ENCODE measurements at regions of chr1 and their contacts with region 1.

Region 1: DNA sequence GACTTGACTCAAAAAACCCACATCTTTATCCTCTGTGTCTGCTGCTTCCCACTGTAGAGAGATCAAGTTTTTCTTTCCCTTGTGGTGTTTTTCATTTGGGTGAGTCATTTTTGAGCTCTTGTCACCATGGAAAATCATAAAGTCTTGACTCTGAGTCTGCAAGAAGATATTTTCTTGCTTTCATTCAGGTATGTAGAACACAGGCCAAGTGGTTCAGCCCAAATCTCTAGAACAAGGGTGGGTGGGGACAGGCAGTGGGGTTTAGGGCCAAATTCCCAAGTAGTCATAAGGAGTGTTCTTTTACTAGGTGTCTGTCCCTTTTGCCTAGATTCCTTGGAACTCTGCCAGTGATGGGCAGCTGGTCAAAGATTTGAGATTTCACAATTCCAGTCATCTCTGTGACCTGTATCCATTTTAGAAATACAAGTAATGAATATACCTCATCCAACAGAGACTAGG is 21.5 kb upstream of the ARHGAP29 start:
- DNase-seq: peak; percentile 89
- H3K4me3 Mint-ChIP-seq: peak overlapping the region; percentile 50
- H3K27ac Mint-ChIP-seq: peak overlapping the region; percentile 99
- H3K4me1 Mint-ChIP-seq: peaks cover 46% of the 10 kb centered on the region
- H3K27me3 Mint-ChIP-seq: no peaks in the 10 kb centered on the region
- CTCF ChIP-seq: no peak

Region 2: GRCh38 chr1:94270801-94271203 is 11.9 kb after region 1 on chr1:
- CTCF ChIA-PET with region 1: interaction called, 10 read pairs
- POLR2A ChIA-PET with region 1: interaction called, 10 read pairs
- intact Hi-C with region 1: no loop called
- DNase-seq: peak; percentile 76
- H3K4me3 Mint-ChIP-seq: no peak overlapping the region
- H3K27ac Mint-ChIP-seq: peak overlapping the region; percentile 24
- H3K4me1 Mint-ChIP-seq: peaks cover 19% of the 10 kb centered on the region
- H3K27me3 Mint-ChIP-seq: no peaks in the 10 kb centered on the region
- CTCF ChIP-seq: no peak

Region 3: DNA sequence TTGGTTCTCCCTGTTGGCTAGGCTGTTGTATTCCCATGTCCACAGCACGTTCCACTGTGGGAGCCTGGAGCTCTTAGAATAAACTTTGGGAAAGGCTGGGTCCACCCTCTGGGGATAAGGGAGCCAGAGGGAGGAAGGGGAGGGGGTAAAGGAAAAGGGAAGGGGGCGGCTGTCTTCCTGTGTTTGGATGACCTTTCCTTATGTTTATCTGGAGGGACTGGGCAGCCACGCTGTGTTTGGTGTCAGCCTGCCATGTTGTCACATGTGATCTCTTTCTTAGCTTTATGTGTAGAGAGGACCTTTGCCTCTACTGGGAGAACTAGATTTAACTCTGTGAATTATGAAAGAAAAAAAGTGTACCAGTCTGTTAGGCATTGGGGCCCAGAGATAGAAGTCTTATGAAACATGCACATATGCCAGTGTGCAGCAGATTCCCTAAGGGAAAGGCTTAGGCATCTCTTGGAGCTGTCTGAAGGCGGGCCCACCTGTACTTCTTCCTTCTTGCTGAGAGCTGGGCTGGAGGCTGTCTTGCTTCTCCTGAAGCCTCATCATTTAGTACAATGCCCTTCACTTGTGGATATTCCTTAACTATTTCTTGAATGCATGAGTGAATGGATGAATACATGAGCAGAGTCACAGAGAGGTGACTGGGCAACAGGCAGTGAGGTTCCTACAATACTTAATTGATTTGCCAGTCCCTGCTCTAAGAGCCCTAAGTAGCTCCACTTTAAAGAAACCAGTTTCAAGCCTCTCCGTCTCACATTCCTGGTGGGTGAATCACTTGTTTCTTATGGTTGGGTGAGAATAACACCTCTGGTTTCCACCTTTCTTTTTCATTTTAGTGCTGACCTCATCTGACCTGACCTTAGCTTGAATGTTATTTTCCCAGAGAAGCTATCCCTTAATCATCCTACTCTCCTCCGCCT is 41.0 kb after region 1 on chr1:
- CTCF ChIA-PET with region 1: no interaction called
- POLR2A ChIA-PET with region 1: interaction called, 16 read pairs
- intact Hi-C with region 1: no loop called
- DNase-seq: peak; percentile 91
- H3K4me3 Mint-ChIP-seq: no peak overlapping the region
- H3K27ac Mint-ChIP-seq: peak overlapping the region; percentile 92
- H3K4me1 Mint-ChIP-seq: peaks cover 30% of the 10 kb centered on the region
- H3K27me3 Mint-ChIP-seq: no peaks in the 10 kb centered on the region
- CTCF ChIP-seq: no peak